OCI-LY7 (cell line): ENCODE measurements at regions of chr19 and their contacts with region 1.

Region 1: GRCh38 chr19:18594096-18594823 is 5.7 kb downstream of the REX1BD start:
- DNase-seq: peak; percentile 89
- H3K4me3 ChIP-seq: peak overlapping the region; percentile 62
- H3K27ac ChIP-seq: peak overlapping the region; percentile 31
- H3K4me1 ChIP-seq: peaks cover 32% of the 10 kb centered on the region
- CTCF ChIP-seq: peak; percentile 89

Region 2: DNA sequence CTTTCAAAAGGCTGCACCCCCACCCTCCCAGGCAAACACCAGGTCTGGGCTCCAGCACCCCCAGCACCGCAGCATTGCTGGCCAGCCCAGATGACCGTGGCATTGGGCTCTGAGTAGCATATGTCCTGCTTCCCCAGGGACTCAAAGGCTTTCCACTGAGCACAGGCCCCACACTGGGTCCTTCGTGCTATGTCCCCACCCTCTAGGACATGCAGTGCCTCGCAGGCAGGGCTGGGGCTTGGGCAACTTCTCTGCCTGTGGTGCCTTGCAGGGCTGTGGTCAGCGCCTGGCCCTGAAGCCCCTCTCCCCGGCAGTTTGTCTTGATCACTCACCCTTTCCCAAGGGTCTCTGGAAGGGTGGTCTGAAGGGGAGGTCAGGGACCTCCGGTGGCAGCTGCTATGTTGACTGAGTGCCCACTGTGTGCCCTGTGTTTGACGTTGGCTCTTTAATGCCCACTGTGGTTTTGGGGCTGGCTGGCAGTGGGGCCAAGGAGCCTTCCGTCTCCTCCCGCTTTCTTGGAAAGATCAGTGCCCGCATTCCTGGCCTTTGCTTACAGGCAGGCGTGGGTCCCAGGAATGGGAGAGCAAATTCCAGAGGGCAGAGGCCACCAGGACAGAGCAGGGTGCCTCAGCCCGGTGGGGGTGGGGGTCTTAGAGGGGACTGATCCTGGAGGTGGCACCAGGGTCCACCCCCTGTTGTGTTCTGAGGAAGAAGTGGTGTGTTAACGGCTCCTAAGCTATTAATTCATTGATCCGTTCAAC is 68.9 kb after region 1 on chr19:
- CTCF ChIA-PET with region 1: interaction called, 10 read pairs
- POLR2A ChIA-PET with region 1: no interaction called
- intact Hi-C with region 1: no loop called
- DNase-seq: no peak
- H3K4me3 ChIP-seq: no peak overlapping the region
- H3K27ac ChIP-seq: no peak overlapping the region
- H3K4me1 ChIP-seq: peaks cover 8% of the 10 kb centered on the region
- CTCF ChIP-seq: no peak

Region 3: DNA sequence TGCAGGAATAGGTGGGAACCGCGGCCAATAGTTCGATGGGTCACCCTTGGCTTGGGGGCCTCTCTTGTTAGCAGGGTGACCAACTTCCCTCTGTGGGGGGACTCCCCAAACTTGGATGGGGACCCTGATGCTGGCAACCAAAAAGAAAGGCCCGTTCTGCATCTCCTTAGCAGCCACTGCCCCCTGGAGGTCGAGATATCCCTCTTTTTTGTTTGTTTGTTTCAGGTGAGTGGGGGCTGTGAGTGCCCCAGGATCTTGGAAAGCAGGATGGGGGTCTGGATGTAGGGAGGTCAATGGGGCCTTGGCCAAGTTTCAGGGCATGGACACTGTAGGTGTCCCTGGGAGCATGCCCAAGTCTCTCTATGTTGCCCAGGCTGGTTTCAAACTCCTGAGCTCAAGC is 81.5 kb after region 1 on chr19:
- CTCF ChIA-PET with region 1: interaction called, 3 read pairs
- POLR2A ChIA-PET with region 1: interaction called, 3 read pairs
- intact Hi-C with region 1: loop called (anchors 2 kb)
- DNase-seq: peak; percentile 48
- H3K4me3 ChIP-seq: no peak overlapping the region
- H3K27ac ChIP-seq: no peak overlapping the region
- H3K4me1 ChIP-seq: no peaks in the 10 kb centered on the region
- CTCF ChIP-seq: peak; percentile 81

Region 4: DNA sequence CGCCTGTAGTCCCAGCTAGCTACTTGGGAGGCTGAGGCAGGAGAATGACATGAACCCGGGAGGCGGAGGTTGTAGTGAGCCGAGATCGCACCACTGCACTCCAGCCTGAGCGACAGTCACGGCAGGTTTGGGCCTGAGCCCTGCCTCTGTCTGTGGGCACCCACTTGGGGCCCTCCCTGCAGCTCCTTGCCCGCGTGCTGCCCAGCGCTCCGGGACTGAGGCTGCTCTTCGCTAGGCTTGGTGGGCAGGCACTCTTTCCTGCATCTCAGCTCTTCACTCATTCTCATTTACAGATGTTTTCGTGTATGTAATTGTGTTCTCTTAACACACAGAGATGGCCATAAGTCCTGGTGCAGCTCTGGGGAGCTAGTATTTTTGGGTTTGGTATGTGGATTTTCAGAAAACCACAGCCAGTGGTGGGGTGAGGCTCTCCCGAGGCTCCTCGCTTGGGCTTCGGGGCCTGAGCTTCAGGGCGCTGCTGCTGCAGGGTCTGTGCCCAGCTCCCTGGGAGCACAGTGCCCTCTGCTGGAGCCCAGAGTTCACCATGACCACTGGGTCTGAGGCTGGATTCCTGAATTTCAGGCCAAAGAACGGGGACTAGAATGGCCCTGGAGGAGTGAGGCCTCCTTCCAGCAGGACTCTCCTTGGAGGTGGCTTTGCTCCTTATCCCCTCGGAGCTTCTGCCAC is 252.7 kb after region 1 on chr19:
- CTCF ChIA-PET with region 1: interaction called, 5 read pairs
- POLR2A ChIA-PET with region 1: no interaction called
- intact Hi-C with region 1: loop called (anchors 1 kb)
- DNase-seq: peak; percentile 72
- H3K4me3 ChIP-seq: no peak overlapping the region
- H3K27ac ChIP-seq: no peak overlapping the region
- H3K4me1 ChIP-seq: peaks cover 8% of the 10 kb centered on the region
- CTCF ChIP-seq: peak; percentile 91